CD8-positive, alpha-beta memory T cell (primary cell): ENCODE measurements at regions of chr11 and their contacts with region 1.

Region 1: DNA sequence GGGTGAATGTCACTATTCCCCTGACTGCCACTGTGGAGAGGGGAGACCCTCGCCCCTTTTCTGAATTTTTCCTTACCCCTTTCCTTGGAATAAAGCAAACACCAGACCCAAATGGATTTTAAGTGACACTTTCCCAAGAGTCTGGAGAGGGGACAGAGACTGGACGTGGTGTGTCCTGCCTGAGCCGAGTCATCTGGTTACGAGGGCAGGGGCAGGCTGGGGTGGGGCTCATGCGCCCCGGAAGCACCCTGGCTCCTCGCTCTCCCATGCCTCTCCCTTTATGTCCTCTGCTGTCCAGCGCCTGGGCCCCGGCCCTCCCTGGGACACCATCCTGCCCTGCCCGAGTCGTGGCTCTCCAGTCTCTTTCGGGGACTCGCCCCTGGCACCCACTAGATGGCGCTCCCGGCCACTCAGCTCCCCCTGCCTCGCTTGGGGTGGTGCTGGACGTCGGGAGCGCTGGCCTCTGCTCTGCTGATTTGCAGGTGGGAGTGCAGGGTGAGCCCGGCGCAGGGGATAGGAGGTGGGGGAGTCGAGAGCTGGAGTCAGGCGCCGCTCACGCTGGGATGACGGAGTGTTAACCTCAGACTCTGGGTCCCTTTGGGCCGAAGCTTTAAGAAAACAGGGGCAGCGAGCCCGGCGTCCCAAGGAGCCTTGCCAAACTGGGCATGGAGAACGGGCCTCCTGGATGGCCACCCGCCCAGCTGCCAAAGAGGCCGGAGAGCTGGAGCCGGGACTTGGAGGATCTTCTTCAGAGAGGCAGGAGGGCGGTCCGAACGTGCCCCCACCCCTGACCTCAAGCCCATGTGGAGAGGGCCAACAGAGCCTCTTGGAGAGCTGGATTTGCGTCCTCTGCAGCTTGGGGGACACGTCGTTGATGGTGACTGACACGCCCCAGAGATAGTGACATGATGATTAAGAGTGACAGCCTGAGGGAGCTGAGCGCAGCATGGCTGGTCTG is 89.9 kb downstream of the RPS6KA4 start:
- DNase-seq: peak; percentile 48 to 77 (median 56)
- H3K4me3 ChIP-seq: peak overlapping the region; percentile 72
- H3K4me3 Mint-ChIP-seq: peak overlapping the region; percentile 65 to 89 (median 85)
- H3K27ac ChIP-seq: no peak overlapping the region
- H3K27ac Mint-ChIP-seq: peak overlapping the region in 4 of 8 donors; percentile 35 to 73 (median 54)
- H3K4me1 ChIP-seq: peaks cover 18% of the 10 kb centered on the region
- H3K4me1 Mint-ChIP-seq: peaks cover 14 to 23% (median 14%) of the 10 kb centered on the region in 3 donors
- H3K27me3 ChIP-seq: peaks cover 7% of the 10 kb centered on the region
- H3K27me3 Mint-ChIP-seq: peaks cover 4 to 22% of the 10 kb centered on the region in 2 donors

Region 2: GRCh38 chr11:64269380-64270234 is 179.3 kb before region 1 on chr11:
- CTCF ChIA-PET with region 1: no interaction called
- POLR2A ChIA-PET with region 1: no interaction called
- DNase-seq: peak; percentile 95 to 98 (median 98)
- H3K4me3 ChIP-seq: peak overlapping the region; percentile 96
- H3K4me3 Mint-ChIP-seq: peak overlapping the region; percentile 93 to 99 (median 98)
- H3K27ac ChIP-seq: peak overlapping the region; percentile 86
- H3K27ac Mint-ChIP-seq: peak overlapping the region; percentile 96 to 99 (median 98)
- H3K4me1 ChIP-seq: peaks cover 22% of the 10 kb centered on the region
- H3K4me1 Mint-ChIP-seq: peaks cover 19 to 28% (median 20%) of the 10 kb centered on the region in 3 donors
- H3K27me3 ChIP-seq: no peaks in the 10 kb centered on the region
- H3K27me3 Mint-ChIP-seq: peaks cover 0 to 3% of the 10 kb centered on the region in 2 donors

Region 3: GRCh38 chr11:64406221-64406946 is 42.5 kb before region 1 on chr11:
- CTCF ChIA-PET with region 1: interaction called, 10 read pairs
- POLR2A ChIA-PET with region 1: no interaction called
- DNase-seq: no peak
- H3K4me3 ChIP-seq: no peak overlapping the region
- H3K4me3 Mint-ChIP-seq: no peak overlapping the region
- H3K27ac ChIP-seq: no peak overlapping the region
- H3K27ac Mint-ChIP-seq: no peak overlapping the region
- H3K4me1 ChIP-seq: no peaks in the 10 kb centered on the region
- H3K4me1 Mint-ChIP-seq: no peaks in the 10 kb centered on the region
- H3K27me3 ChIP-seq: no peaks in the 10 kb centered on the region
- H3K27me3 Mint-ChIP-seq: peaks cover 10 to 16% of the 10 kb centered on the region in 2 donors

Region 4: DNA sequence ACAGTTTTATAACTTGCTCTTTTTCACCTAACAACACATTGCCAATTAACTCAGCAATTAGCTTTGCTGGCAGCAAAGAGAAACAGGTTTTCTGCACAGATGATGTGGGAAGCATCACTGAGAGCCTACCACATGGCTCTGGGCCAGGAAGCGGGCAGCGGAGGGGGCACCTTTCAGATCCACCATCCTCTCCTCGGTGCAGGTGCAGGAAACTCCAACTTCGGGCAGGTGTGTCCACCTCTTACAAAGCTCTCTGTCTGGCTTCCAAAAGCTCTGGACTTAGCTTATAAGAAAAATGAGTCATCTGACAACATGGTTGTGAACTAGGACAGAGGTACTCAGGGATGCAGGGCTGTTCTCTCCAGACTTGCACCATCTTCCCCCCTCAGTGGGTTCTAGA is 12.9 kb before region 1 on chr11:
- CTCF ChIA-PET with region 1: interaction called, 21 read pairs
- POLR2A ChIA-PET with region 1: no interaction called
- DNase-seq: no peak
- H3K4me3 ChIP-seq: no peak overlapping the region
- H3K4me3 Mint-ChIP-seq: no peak overlapping the region
- H3K27ac ChIP-seq: no peak overlapping the region
- H3K27ac Mint-ChIP-seq: no peak overlapping the region
- H3K4me1 ChIP-seq: no peaks in the 10 kb centered on the region
- H3K4me1 Mint-ChIP-seq: no peaks in the 10 kb centered on the region
- H3K27me3 ChIP-seq: no peaks in the 10 kb centered on the region
- H3K27me3 Mint-ChIP-seq: peaks cover 16 to 44% of the 10 kb centered on the region in 2 donors